ENCODE measurements at regions of chr6 and their contacts with region 1.

Region 1: DNA sequence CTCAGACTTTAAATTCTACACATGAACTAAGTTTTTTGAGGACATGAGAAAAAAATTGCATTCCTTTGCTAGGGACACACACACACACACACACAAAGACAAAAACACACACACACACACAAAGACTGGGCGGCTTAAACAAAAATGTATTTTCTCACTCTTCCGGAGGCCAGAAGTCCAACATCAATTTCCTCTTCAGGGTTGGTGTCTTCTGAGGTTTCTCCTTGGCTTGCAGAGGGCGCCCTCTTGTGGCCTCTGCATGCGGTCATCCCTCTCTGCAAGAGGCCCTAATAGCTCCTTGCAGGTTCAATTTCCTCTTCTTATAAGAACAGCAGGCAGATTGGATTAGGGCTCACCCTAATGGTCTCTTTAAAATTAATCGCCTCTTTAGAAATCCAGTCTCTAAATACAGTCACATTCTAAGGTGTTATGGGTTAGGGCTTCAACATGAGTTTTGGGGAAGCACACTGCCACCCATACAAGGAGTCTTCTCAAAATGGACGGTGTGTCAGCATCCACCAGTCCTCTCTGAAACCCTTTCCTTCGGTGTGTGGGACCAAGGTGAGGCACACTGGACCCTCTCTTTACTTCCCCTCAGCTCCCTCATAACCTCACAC is 61.4 kb downstream of the GPR6 start:
- DNase-seq: peak; percentile 90
- ATAC-seq: peak; percentile 85
- H3K4me3 ChIP-seq: peak overlapping the region; percentile 43 to 62 (median 59)
- H3K4me3 Mint-ChIP-seq: peak overlapping the region; percentile 88
- H3K27ac ChIP-seq: peak overlapping the region; percentile 48 to 66
- H3K27ac Mint-ChIP-seq: peak overlapping the region; percentile 86
- H3K4me1 ChIP-seq: peaks cover 8 to 28% of the 10 kb centered on the region in 2 donors
- H3K4me1 Mint-ChIP-seq: peaks cover 20% of the 10 kb centered on the region
- H3K27me3 ChIP-seq: no peaks in the 10 kb centered on the region
- H3K27me3 Mint-ChIP-seq: no peaks in the 10 kb centered on the region
- CTCF ChIP-seq: peak; percentile 82

Region 2: GRCh38 chr6:109187399-109188114 is 851.9 kb before region 1 on chr6:
- CTCF ChIA-PET with region 1: interaction called, 17 read pairs
- POLR2A ChIA-PET with region 1: no interaction called
- intact Hi-C with region 1: loop called (anchors 1 kb)
- DNase-seq: peak; percentile 71
- ATAC-seq: peak; percentile 82
- H3K4me3 ChIP-seq: no peak overlapping the region
- H3K4me3 Mint-ChIP-seq: no peak overlapping the region
- H3K27ac ChIP-seq: no peak overlapping the region
- H3K27ac Mint-ChIP-seq: no peak overlapping the region
- H3K4me1 ChIP-seq: peaks cover 8 to 16% of the 10 kb centered on the region in 2 donors
- H3K4me1 Mint-ChIP-seq: peaks cover 9% of the 10 kb centered on the region
- H3K27me3 ChIP-seq: peaks cover 0 to 4% (median 0%) of the 10 kb centered on the region in 4 experiments
- H3K27me3 Mint-ChIP-seq: peaks cover 11% of the 10 kb centered on the region
- CTCF ChIP-seq: peak; percentile 97

Region 3: GRCh38 chr6:109595998-109596397 is 443.5 kb before region 1 on chr6:
- CTCF ChIA-PET with region 1: interaction called, 11 read pairs
- POLR2A ChIA-PET with region 1: no interaction called
- intact Hi-C with region 1: loop called (anchors 1 kb)
- DNase-seq: peak; percentile 11
- ATAC-seq: no peak
- H3K4me3 ChIP-seq: no peak overlapping the region
- H3K4me3 Mint-ChIP-seq: no peak overlapping the region
- H3K27ac ChIP-seq: no peak overlapping the region
- H3K27ac Mint-ChIP-seq: no peak overlapping the region
- H3K4me1 ChIP-seq: no peaks in the 10 kb centered on the region
- H3K4me1 Mint-ChIP-seq: no peaks in the 10 kb centered on the region
- H3K27me3 ChIP-seq: no peaks in the 10 kb centered on the region
- H3K27me3 Mint-ChIP-seq: no peaks in the 10 kb centered on the region
- CTCF ChIP-seq: peak; percentile 31

Region 4: DNA sequence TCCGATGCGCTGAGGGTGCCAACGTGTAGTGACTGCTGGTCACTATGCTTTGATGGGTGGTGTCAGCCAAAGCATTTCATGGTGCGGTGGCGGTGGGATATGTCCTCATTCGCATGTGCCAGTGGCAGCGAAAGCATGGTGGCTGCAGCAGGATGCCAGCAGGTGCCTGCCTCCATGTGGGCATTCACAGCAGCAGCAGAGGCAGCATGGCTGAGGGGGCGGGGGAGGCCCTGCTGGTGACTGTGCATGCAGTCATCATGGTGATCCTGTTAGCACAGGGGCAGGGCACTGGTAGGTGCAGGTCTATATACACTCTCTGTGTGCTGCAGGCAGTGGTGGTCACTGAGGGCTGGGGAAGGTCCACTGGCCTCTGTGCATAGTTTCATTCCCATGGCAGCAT is 326.4 kb before region 1 on chr6:
- CTCF ChIA-PET with region 1: interaction called, 45 read pairs
- POLR2A ChIA-PET with region 1: no interaction called
- intact Hi-C with region 1: no loop called
- DNase-seq: no peak
- ATAC-seq: no peak
- H3K4me3 ChIP-seq: no peak overlapping the region
- H3K4me3 Mint-ChIP-seq: no peak overlapping the region
- H3K27ac ChIP-seq: no peak overlapping the region
- H3K27ac Mint-ChIP-seq: no peak overlapping the region
- H3K4me1 ChIP-seq: peaks cover 8 to 10% of the 10 kb centered on the region in 2 donors
- H3K4me1 Mint-ChIP-seq: peaks cover 47% of the 10 kb centered on the region
- H3K27me3 ChIP-seq: no peaks in the 10 kb centered on the region
- H3K27me3 Mint-ChIP-seq: no peaks in the 10 kb centered on the region
- CTCF ChIP-seq: no peak

Region 5: GRCh38 chr6:109783250-109783986 is 256.1 kb before region 1 on chr6:
- CTCF ChIA-PET with region 1: interaction called, 16 read pairs
- POLR2A ChIA-PET with region 1: no interaction called
- intact Hi-C with region 1: no loop called
- DNase-seq: peak; percentile 22
- ATAC-seq: no peak
- H3K4me3 ChIP-seq: no peak overlapping the region
- H3K4me3 Mint-ChIP-seq: no peak overlapping the region
- H3K27ac ChIP-seq: no peak overlapping the region
- H3K27ac Mint-ChIP-seq: no peak overlapping the region
- H3K4me1 ChIP-seq: no peaks in the 10 kb centered on the region
- H3K4me1 Mint-ChIP-seq: peaks cover 9% of the 10 kb centered on the region
- H3K27me3 ChIP-seq: no peaks in the 10 kb centered on the region
- H3K27me3 Mint-ChIP-seq: no peaks in the 10 kb centered on the region
- CTCF ChIP-seq: peak; percentile 34

Region 6: GRCh38 chr6:110053395-110054240 is 14.1 kb after region 1 on chr6:
- CTCF ChIA-PET with region 1: interaction called, 34 read pairs
- POLR2A ChIA-PET with region 1: no interaction called
- intact Hi-C with region 1: loop called (anchors 1 kb)
- DNase-seq: peak; percentile 53
- ATAC-seq: no peak
- H3K4me3 ChIP-seq: no peak overlapping the region
- H3K4me3 Mint-ChIP-seq: no peak overlapping the region
- H3K27ac ChIP-seq: no peak overlapping the region
- H3K27ac Mint-ChIP-seq: no peak overlapping the region
- H3K4me1 ChIP-seq: peaks cover 0 to 3% of the 10 kb centered on the region in 2 donors
- H3K4me1 Mint-ChIP-seq: no peaks in the 10 kb centered on the region
- H3K27me3 ChIP-seq: no peaks in the 10 kb centered on the region
- H3K27me3 Mint-ChIP-seq: peaks cover 7% of the 10 kb centered on the region
- CTCF ChIP-seq: peak; percentile 57

Region 7: GRCh38 chr6:110201151-110201884 is 161.8 kb after region 1 on chr6:
- CTCF ChIA-PET with region 1: interaction called, 20 read pairs
- POLR2A ChIA-PET with region 1: no interaction called
- intact Hi-C with region 1: loop called (anchors 5 kb)
- DNase-seq: no peak
- ATAC-seq: no peak
- H3K4me3 ChIP-seq: no peak overlapping the region
- H3K4me3 Mint-ChIP-seq: no peak overlapping the region
- H3K27ac ChIP-seq: peak overlapping the region in 1 of 2 donors; percentile 47
- H3K27ac Mint-ChIP-seq: peak overlapping the region; percentile 71
- H3K4me1 ChIP-seq: peaks cover 22 to 33% of the 10 kb centered on the region in 2 donors
- H3K4me1 Mint-ChIP-seq: peaks cover 51% of the 10 kb centered on the region
- H3K27me3 ChIP-seq: no peaks in the 10 kb centered on the region
- H3K27me3 Mint-ChIP-seq: no peaks in the 10 kb centered on the region
- CTCF ChIP-seq: no peak

Region 8: DNA sequence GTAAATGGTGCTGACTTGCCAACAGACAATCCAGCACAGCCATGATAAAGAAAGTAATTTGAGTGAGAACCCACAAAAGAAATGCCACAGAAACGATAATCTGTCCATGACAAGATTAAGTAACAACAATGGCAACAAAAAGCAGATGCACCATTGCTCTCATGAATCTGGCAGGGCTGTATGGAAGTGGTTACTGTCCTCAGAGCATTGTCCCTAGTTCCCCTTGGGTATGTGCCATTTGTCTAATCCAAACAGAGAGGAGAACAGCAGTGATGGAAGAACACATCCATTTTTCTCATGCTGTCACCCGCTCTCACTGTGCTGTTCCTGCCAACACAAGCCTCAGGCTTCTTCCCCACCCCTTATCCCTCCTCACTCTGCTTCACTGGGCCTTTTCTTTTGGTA is 1377.7 kb after region 1 on chr6:
- CTCF ChIA-PET with region 1: no interaction called
- POLR2A ChIA-PET with region 1: no interaction called
- intact Hi-C with region 1: no loop called
- DNase-seq: no peak
- ATAC-seq: no peak
- H3K4me3 ChIP-seq: no peak overlapping the region
- H3K4me3 Mint-ChIP-seq: no peak overlapping the region
- H3K27ac ChIP-seq: no peak overlapping the region
- H3K27ac Mint-ChIP-seq: no peak overlapping the region
- H3K4me1 ChIP-seq: peaks cover 7 to 9% of the 10 kb centered on the region in 2 donors
- H3K4me1 Mint-ChIP-seq: peaks cover 3% of the 10 kb centered on the region
- H3K27me3 ChIP-seq: no peaks in the 10 kb centered on the region
- H3K27me3 Mint-ChIP-seq: no peaks in the 10 kb centered on the region
- CTCF ChIP-seq: no peak